OCI-LY7 (cell line): ENCODE measurements at regions of chr9 and their contacts with region 1.

Region 1: GRCh38 chr9:116860509-116861120 is 173.5 kb downstream of the TRIM32 start:
- DNase-seq: peak; percentile 52
- H3K4me3 ChIP-seq: no peak overlapping the region
- H3K27ac ChIP-seq: no peak overlapping the region
- H3K4me1 ChIP-seq: no peaks in the 10 kb centered on the region
- CTCF ChIP-seq: peak; percentile 85

Region 2: GRCh38 chr9:116737152-116737546 is 123.5 kb before region 1 on chr9:
- CTCF ChIA-PET with region 1: interaction called, 29 read pairs
- POLR2A ChIA-PET with region 1: no interaction called
- intact Hi-C with region 1: loop called (anchors 1 kb)
- DNase-seq: peak; percentile 78
- H3K4me3 ChIP-seq: no peak overlapping the region
- H3K27ac ChIP-seq: no peak overlapping the region
- H3K4me1 ChIP-seq: no peaks in the 10 kb centered on the region
- CTCF ChIP-seq: peak; percentile 91

Region 3: GRCh38 chr9:116791326-116791725 is 69.3 kb before region 1 on chr9:
- CTCF ChIA-PET with region 1: no interaction called
- POLR2A ChIA-PET with region 1: interaction called, 7 read pairs
- intact Hi-C with region 1: loop called (anchors 10 kb)
- DNase-seq: no peak
- H3K4me3 ChIP-seq: no peak overlapping the region
- H3K27ac ChIP-seq: no peak overlapping the region
- H3K4me1 ChIP-seq: no peaks in the 10 kb centered on the region
- CTCF ChIP-seq: no peak

Region 4: DNA sequence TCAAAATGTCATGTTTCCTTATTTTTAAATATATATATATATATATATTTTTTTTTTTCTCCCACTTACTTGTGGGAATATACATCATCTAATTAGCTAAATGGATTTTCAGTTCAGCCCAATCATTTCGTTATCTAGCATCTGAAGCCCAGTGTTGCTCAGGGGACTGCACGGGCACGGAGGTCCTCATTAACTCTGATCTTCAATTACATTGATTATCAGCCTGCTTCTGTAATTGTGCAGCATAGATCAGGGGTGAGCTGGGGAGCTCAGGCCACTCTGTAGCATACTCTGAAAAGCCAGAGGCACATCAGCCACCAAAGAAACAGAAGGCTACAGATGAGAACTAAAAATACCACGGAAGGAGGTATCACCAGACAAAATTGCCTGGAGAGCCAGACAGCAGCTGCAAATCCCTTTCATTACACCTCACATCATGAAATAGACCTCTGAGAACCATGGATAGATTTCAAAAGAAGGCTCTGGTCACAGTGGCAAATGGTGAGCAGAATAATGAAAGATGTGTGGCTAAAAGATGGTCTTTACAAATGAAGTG is 152.9 kb after region 1 on chr9:
- CTCF ChIA-PET with region 1: no interaction called
- POLR2A ChIA-PET with region 1: no interaction called
- intact Hi-C with region 1: no loop called
- DNase-seq: no peak
- H3K4me3 ChIP-seq: no peak overlapping the region
- H3K27ac ChIP-seq: no peak overlapping the region
- H3K4me1 ChIP-seq: no peaks in the 10 kb centered on the region
- CTCF ChIP-seq: no peak

Region 5: GRCh38 chr9:117046666-117047327 is 186.2 kb after region 1 on chr9:
- CTCF ChIA-PET with region 1: no interaction called
- POLR2A ChIA-PET with region 1: no interaction called
- intact Hi-C with region 1: no loop called
- DNase-seq: no peak
- H3K4me3 ChIP-seq: no peak overlapping the region
- H3K27ac ChIP-seq: no peak overlapping the region
- H3K4me1 ChIP-seq: no peaks in the 10 kb centered on the region
- CTCF ChIP-seq: 0 out of 2 replicates have a peak, but pooled peaks have one; percentile 42

Region 6: GRCh38 chr9:117853442-117853841 is 992.8 kb after region 1 on chr9:
- CTCF ChIA-PET with region 1: no interaction called
- POLR2A ChIA-PET with region 1: no interaction called
- intact Hi-C with region 1: no loop called
- DNase-seq: no peak
- H3K4me3 ChIP-seq: no peak overlapping the region
- H3K27ac ChIP-seq: no peak overlapping the region
- H3K4me1 ChIP-seq: no peaks in the 10 kb centered on the region
- CTCF ChIP-seq: no peak